ENCODE measurements at regions of chr9 and their contacts with region 1.

Region 1: GRCh38 chr9:125241000-125241862 is at the start of gene HSPA5:
- DNase-seq: peak; percentile 100
- H3K4me3 Mint-ChIP-seq: peak within 1 kb of the TSS; percentile 92
- H3K27ac Mint-ChIP-seq: peak within 1 kb of the TSS; percentile 98
- H3K4me1 Mint-ChIP-seq: peaks cover 48% of the 10 kb centered on the region
- H3K27me3 Mint-ChIP-seq: no peaks in the 10 kb centered on the region
- total RNA-seq, gene HSPA5: 155 to 156 TPM

Region 2: DNA sequence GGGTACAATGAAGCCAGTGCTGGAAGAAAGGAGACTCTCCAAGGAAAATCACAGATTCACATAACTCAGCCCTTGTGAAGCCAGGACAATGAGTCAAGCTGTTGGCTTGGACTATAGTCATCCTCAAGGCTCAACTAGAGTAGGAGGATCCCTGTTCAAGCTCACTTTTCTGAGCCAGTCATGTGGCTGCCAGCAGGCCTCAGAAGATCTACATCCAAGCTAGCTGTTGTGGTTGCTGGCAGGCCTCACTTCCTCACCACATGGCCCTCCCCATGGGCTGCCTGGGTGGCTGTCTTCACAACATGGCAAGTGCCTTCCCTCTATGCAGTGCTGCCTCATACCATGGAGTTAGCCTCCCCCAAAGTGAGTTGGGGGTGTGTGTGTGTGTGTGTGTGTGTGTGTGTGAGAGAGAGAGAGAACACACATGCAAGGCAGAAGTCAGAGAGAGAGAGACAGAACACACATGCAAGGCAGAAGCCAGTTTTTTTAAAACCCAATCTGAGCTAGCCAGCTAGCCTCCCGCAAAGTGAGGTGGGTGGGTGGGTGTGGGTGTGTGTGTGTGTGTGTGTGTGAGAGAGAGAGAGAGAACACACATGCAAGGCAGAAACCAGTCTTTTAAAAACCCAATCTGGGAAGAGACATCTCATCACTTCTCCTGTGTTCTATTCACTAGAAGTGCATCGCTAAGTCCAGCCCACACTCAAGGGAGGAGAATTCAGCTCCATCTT is 115.0 kb before region 1 on chr9:
- CTCF ChIA-PET with region 1: no interaction called
- POLR2A ChIA-PET with region 1: interaction called, 14 read pairs
- DNase-seq: peak; percentile 88
- H3K4me3 Mint-ChIP-seq: peak overlapping the region; percentile 22
- H3K27ac Mint-ChIP-seq: peak overlapping the region; percentile 91
- H3K4me1 Mint-ChIP-seq: peaks cover 24% of the 10 kb centered on the region
- H3K27me3 Mint-ChIP-seq: no peaks in the 10 kb centered on the region

Region 3: DNA sequence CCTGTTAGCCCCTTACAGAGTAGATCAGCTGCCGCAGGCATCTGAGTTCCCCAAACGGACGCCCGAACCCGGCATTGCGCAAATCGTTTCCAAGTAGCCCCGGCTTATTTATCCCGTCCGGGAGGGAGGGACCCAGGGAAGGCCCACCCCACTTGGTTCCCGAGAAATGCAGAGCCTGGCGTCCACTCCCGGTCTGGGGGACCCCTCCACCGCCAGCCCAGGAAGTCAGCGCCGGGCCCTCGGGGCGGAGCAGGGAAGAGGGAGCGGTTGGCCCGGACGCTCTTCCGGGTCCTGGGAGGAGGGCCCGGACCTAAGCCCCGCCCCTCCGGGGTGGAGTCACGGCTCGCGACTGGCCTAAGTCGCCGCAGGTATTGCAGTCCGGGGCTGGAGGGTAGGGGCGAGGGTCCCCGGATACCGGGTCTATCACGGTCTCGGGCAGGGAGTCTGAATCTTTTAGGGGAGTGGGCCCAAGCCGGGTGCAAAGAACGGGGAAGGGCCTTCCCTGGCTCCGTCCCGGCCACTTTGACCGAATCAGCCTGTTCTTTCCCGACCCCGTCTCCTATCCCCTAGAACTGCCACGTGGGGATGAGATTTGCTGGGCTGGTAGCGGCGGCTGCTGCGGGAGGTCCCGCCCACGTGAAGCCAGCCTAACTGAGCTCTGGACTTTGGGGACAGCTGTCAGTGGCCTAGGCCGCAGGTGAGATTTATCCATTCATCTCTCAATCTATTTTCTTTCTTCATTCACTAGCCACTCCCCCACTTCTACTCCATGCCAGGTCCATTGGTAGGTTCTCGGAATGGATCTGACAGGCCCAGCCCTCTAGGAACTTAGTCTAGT is 40.8 kb before region 1 on chr9 and contains the start of gene RABEPK:
- CTCF ChIA-PET with region 1: interaction called, 5 read pairs
- POLR2A ChIA-PET with region 1: interaction called, 74 read pairs
- DNase-seq: peak; percentile 91
- H3K4me3 Mint-ChIP-seq: peak within 1 kb of the TSS; percentile 92
- H3K27ac Mint-ChIP-seq: peak within 1 kb of the TSS; percentile 83
- H3K4me1 Mint-ChIP-seq: peaks cover 22% of the 10 kb centered on the region
- H3K27me3 Mint-ChIP-seq: peaks cover 1% of the 10 kb centered on the region
- total RNA-seq, gene RABEPK: 11.8 to 12.1 TPM

Region 4: GRCh38 chr9:125255781-125256391 is 14.7 kb after region 1 on chr9:
- CTCF ChIA-PET with region 1: interaction called, 26 read pairs
- POLR2A ChIA-PET with region 1: interaction called, 112 read pairs
- DNase-seq: no peak
- H3K4me3 Mint-ChIP-seq: no peak overlapping the region
- H3K27ac Mint-ChIP-seq: no peak overlapping the region
- H3K4me1 Mint-ChIP-seq: peaks cover 6% of the 10 kb centered on the region
- H3K27me3 Mint-ChIP-seq: peaks cover 2% of the 10 kb centered on the region

Region 5: GRCh38 chr9:125268394-125269013 is 27.3 kb after region 1 on chr9:
- CTCF ChIA-PET with region 1: interaction called, 3 read pairs
- POLR2A ChIA-PET with region 1: interaction called, 112 read pairs
- DNase-seq: no peak
- H3K4me3 Mint-ChIP-seq: no peak overlapping the region
- H3K27ac Mint-ChIP-seq: no peak overlapping the region
- H3K4me1 Mint-ChIP-seq: peaks cover 26% of the 10 kb centered on the region
- H3K27me3 Mint-ChIP-seq: no peaks in the 10 kb centered on the region

Measured in activated CD4-positive, alpha-beta memory T cell treated with anti-CD3 and anti-CD28 coated beads, Interleukin-2, amount 10 ng/mL, durations not matched to agents 7 days and 5 days (primary cell).